ENCODE measurements at regions of chr1 and their contacts with region 1.

Region 1: GRCh38 chr1:182084487-182085316 is 23.2 kb upstream of the ZNF648 start:
- DNase-seq: peak; percentile 83
- ATAC-seq: peak; percentile 96
- H3K4me3 ChIP-seq: peak overlapping the region; percentile 25; the same call in 1 of the 2 replicates
- H3K27ac ChIP-seq: no peak overlapping the region
- H3K4me1 ChIP-seq: peaks cover 15% of the 10 kb centered on the region
- H3K27me3 ChIP-seq: no peaks in the 10 kb centered on the region
- CTCF ChIP-seq: peak; percentile 66

Region 2: GRCh38 chr1:182120411-182121239 is 35.9 kb after region 1 on chr1:
- CTCF ChIA-PET with region 1: no interaction called
- POLR2A ChIA-PET with region 1: no interaction called
- intact Hi-C with region 1: loop called (anchors 2 kb)
- DNase-seq: peak; percentile 88
- ATAC-seq: peak; percentile 79
- H3K4me3 ChIP-seq: peak overlapping the region; percentile 13; the same call in 1 of the 2 replicates
- H3K27ac ChIP-seq: peak overlapping the region; percentile 86
- H3K4me1 ChIP-seq: peaks cover 37% of the 10 kb centered on the region
- H3K27me3 ChIP-seq: no peaks in the 10 kb centered on the region
- CTCF ChIP-seq: no peak

Region 3: DNA sequence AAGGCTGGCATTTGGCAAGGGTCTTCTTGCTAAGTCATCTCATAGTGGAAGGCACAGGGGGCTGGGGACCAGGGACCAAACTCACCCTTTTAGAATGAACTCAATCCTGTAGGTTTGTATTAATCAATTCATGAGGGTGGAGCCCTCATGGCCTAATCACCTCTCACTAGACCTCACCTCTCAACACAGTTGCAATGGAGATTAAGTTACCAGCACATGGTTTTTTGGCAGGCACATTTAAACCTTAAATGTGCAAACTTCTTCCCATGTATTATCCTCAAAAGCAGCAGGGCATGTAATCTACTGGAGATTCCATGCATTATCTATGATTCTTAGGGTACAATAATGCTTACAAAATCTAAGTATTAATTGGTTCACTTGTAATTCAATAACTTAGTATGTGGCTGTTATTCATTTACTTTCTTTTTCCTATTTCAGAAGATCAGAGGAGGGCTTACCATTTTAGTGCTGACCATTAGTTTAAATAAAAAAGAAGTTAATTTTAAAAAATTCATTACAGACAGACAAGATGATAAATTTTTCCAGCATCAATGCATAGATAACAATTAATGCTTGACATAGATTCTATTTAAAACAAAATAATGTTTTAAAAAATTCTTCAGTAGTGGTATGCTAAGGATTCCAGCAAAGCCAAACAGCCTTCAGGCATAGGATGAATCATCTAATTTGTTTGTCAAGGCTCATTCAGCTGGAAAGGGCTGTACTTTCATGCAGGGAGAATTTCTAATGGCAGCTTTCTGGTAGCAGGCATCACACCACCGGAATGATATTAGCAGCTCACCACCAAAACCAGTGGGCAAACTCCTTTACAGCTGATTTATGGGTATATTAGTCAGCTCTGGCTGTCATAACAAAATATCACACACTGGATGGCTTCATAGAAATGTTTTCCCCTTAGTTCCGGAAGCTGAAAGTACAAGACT is 101.4 kb after region 1 on chr1:
- CTCF ChIA-PET with region 1: no interaction called
- POLR2A ChIA-PET with region 1: no interaction called
- intact Hi-C with region 1: loop called (anchors 10 kb)
- DNase-seq: peak; percentile 92
- ATAC-seq: peak; percentile 87
- H3K4me3 ChIP-seq: peak overlapping the region; percentile 23; the same call in 1 of the 2 replicates
- H3K27ac ChIP-seq: peak overlapping the region; percentile 82
- H3K4me1 ChIP-seq: peaks cover 35% of the 10 kb centered on the region
- H3K27me3 ChIP-seq: no peaks in the 10 kb centered on the region
- CTCF ChIP-seq: no peak

Region 4: GRCh38 chr1:182330303-182330702 is 245.6 kb after region 1 on chr1:
- CTCF ChIA-PET with region 1: no interaction called
- POLR2A ChIA-PET with region 1: no interaction called
- intact Hi-C with region 1: loop called (anchors 10 kb)
- DNase-seq: no peak
- ATAC-seq: no peak
- H3K4me3 ChIP-seq: no peak overlapping the region
- H3K27ac ChIP-seq: no peak overlapping the region
- H3K4me1 ChIP-seq: no peaks in the 10 kb centered on the region
- H3K27me3 ChIP-seq: no peaks in the 10 kb centered on the region
- CTCF ChIP-seq: no peak

Region 5: DNA sequence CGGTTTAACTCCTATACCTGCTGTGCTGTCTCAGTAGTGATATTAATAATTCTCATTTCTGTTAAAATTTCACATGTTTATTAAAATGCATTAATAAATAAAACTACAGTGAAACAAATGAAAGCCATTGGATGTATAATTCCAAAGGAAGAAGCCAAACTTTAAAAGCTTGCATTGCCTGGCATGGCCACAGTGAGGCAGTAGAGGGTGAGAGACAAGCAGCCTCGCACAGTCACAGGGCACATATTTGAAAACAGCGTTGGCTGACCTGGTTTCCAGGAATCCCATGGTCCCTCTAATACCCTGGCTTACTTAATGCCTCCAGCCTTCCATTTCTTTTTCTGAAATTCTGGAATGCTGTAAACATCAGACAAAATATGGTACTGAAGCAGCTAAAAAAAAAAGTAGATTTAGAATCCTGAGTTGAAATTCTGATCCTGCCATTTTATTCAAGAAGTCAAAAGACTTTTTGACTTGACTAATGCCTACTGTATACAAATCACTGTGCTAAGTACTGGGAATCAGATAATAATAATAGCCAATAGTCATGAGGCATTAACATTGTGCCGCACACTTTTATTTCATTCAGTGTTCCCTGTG is 511.0 kb after region 1 on chr1:
- CTCF ChIA-PET with region 1: interaction called, 4 read pairs
- POLR2A ChIA-PET with region 1: no interaction called
- intact Hi-C with region 1: loop called (anchors 10 kb)
- DNase-seq: peak; percentile 63
- ATAC-seq: peak; percentile 35; the same call in 1 of the 2 replicates
- H3K4me3 ChIP-seq: no peak overlapping the region
- H3K27ac ChIP-seq: no peak overlapping the region
- H3K4me1 ChIP-seq: peaks cover 7% of the 10 kb centered on the region
- H3K27me3 ChIP-seq: no peaks in the 10 kb centered on the region
- CTCF ChIP-seq: peak; percentile 77

Measured in PC-3 (cell line).